H1 (cell line): ENCODE measurements at regions of chr11 and their contacts with region 1.

Region 1: GRCh38 chr11:125364121-125364826 is 131.8 kb downstream of the FEZ1 start:
- DNase-seq: no peak
- H3K4me3 ChIP-seq: no peak overlapping the region
- H3K27ac ChIP-seq: no peak overlapping the region
- H3K4me1 ChIP-seq: peaks cover 0 to under 1% (median under 1%) of the 10 kb centered on the region in 4 experiments; a peak in 3 of 7 replicates
- H3K27me3 ChIP-seq: no peaks in the 10 kb centered on the region
- CTCF ChIP-seq: peak; percentile 18 to 38 (median 30)
- EP300 ChIP-seq: no peak
- POLR2A ChIP-seq: no peak
- RAD21 ChIP-seq: no peak; a peak in 1 of 4 replicates

Region 2: GRCh38 chr11:125245299-125245698 is 119.0 kb before region 1 on chr11:
- CTCF ChIA-PET with region 1: no interaction called
- POLR2A ChIA-PET with region 1: no interaction called
- DNase-seq: no peak
- H3K4me3 ChIP-seq: no peak overlapping the region
- H3K27ac ChIP-seq: no peak overlapping the region
- H3K4me1 ChIP-seq: peaks cover 0 to 12% (median 3%) of the 10 kb centered on the region in 4 experiments; a peak in 5 of 7 replicates
- H3K27me3 ChIP-seq: 0 out of 7 replicates have a peak, but pooled peaks cover 0 to 2% (median 0%) of the 10 kb centered on the region in 4 experiments
- CTCF ChIP-seq: no peak
- EP300 ChIP-seq: no peak
- POLR2A ChIP-seq: no peak
- RAD21 ChIP-seq: no peak

Region 3: GRCh38 chr11:125376117-125376516 is 11.8 kb after region 1 on chr11:
- CTCF ChIA-PET with region 1: interaction called, 315 read pairs
- POLR2A ChIA-PET with region 1: interaction called, 3 read pairs
- DNase-seq: no peak
- H3K4me3 ChIP-seq: no peak overlapping the region
- H3K27ac ChIP-seq: no peak overlapping the region
- H3K4me1 ChIP-seq: peaks cover 12 to 25% (median 22%) of the 10 kb centered on the region in 4 experiments
- H3K27me3 ChIP-seq: peaks cover 0 to 4% (median 0%) of the 10 kb centered on the region in 4 experiments; a peak in 2 of 7 replicates
- CTCF ChIP-seq: no peak
- EP300 ChIP-seq: no peak
- POLR2A ChIP-seq: no peak
- RAD21 ChIP-seq: no peak

Region 4: GRCh38 chr11:125382314-125382791 is 18.1 kb after region 1 on chr11:
- CTCF ChIA-PET with region 1: interaction called, 315 read pairs
- POLR2A ChIA-PET with region 1: no interaction called
- DNase-seq: no peak
- H3K4me3 ChIP-seq: no peak overlapping the region
- H3K27ac ChIP-seq: no peak overlapping the region
- H3K4me1 ChIP-seq: peaks cover 0 to 9% (median 0%) of the 10 kb centered on the region in 4 experiments; a peak in 3 of 7 replicates
- H3K27me3 ChIP-seq: no peaks in the 10 kb centered on the region; a peak in 1 of 7 replicates
- CTCF ChIP-seq: no peak
- EP300 ChIP-seq: no peak
- POLR2A ChIP-seq: no peak
- RAD21 ChIP-seq: no peak

Region 5: GRCh38 chr11:125404776-125405435 is 40.6 kb after region 1 on chr11:
- CTCF ChIA-PET with region 1: interaction called, 223 read pairs
- POLR2A ChIA-PET with region 1: interaction called, 3 read pairs
- DNase-seq: peak in 1 of 2 experiments; percentile 97
- H3K4me3 ChIP-seq: no peak overlapping the region
- H3K27ac ChIP-seq: no peak overlapping the region
- H3K4me1 ChIP-seq: peaks cover 12 to 29% (median 17%) of the 10 kb centered on the region in 4 experiments
- H3K27me3 ChIP-seq: peaks cover 0 to 4% (median under 1%) of the 10 kb centered on the region in 4 experiments; a peak in 2 of 7 replicates
- CTCF ChIP-seq: peak; percentile 94 to 98 (median 96)
- EP300 ChIP-seq: no peak
- POLR2A ChIP-seq: no peak
- RAD21 ChIP-seq: peak; percentile 93 to 98

Region 6: DNA sequence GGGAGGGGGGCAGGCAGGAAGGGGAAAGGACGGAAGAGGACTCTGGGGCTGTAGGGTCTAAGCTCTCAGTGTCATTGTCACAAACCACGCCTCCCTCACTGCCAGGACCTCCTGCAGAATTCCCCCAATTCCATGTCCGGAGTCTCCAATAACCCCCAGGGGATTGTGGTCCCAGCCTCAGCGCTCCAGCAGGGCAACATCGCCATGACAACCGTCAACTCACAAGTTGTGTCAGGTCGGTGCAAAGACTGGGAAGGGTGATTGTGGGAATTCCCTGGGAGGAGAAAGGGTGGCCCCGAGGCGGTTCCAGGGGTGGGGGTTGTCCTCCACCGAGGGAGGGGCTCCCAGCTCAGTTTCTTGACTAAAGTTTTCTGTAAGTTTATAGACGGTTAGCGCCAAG is 45.8 kb after region 1 on chr11:
- CTCF ChIA-PET with region 1: interaction called, 223 read pairs
- POLR2A ChIA-PET with region 1: interaction called, 3 read pairs
- DNase-seq: peak in 1 of 2 experiments; percentile 60
- H3K4me3 ChIP-seq: no peak overlapping the region
- H3K27ac ChIP-seq: no peak overlapping the region
- H3K4me1 ChIP-seq: peaks cover 0 to 8% (median 4%) of the 10 kb centered on the region in 4 experiments; a peak in 3 of 7 replicates
- H3K27me3 ChIP-seq: 0 out of 7 replicates have a peak, but pooled peaks cover 0 to 4% (median under 1%) of the 10 kb centered on the region in 4 experiments
- CTCF ChIP-seq: no peak
- EP300 ChIP-seq: no peak
- POLR2A ChIP-seq: no peak
- RAD21 ChIP-seq: no peak

Region 7: DNA sequence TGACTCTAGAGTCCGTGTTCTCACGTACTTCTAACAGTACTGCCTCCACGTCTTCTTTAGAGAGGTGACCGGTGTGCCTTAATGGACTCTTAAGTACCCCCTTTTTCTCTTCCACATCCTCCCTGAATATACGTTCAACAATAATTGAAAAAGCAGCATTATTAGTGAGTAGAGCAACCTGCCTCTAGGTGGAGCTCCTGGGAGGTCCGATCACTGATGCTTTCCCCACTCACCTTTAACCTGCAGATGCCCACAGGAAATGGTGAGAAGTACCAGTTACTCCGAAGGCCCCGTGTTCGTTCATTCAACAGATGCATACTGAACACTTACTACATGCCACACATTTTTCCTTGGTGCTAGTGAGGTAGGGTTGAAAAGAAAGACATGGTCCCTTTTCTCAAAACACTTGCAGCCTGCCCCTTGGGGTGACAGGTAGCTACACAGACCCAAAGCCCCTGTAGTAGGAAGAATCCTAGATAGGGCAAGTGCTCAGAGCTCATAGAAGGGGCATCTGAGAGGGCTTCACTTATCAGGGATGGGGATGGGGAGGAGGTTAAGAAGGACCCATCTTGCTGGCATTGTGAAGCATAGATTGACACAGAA is 59.1 kb after region 1 on chr11:
- CTCF ChIA-PET with region 1: interaction called, 234 read pairs
- POLR2A ChIA-PET with region 1: no interaction called
- DNase-seq: no peak
- H3K4me3 ChIP-seq: no peak overlapping the region
- H3K27ac ChIP-seq: no peak overlapping the region
- H3K4me1 ChIP-seq: peaks cover 0 to 4% (median under 1%) of the 10 kb centered on the region in 4 experiments; a peak in 3 of 7 replicates
- H3K27me3 ChIP-seq: no peaks in the 10 kb centered on the region
- CTCF ChIP-seq: peak; percentile 54 to 80 (median 59)
- EP300 ChIP-seq: no peak
- POLR2A ChIP-seq: no peak
- RAD21 ChIP-seq: peak; percentile 40 to 47; a peak in 3 of 4 replicates

Region 8: GRCh38 chr11:125429166-125429707 is 65.0 kb after region 1 on chr11:
- CTCF ChIA-PET with region 1: interaction called, 234 read pairs
- POLR2A ChIA-PET with region 1: no interaction called
- DNase-seq: peak; percentile 58 to 90
- H3K4me3 ChIP-seq: no peak overlapping the region; a peak in 1 of 8 replicates
- H3K27ac ChIP-seq: no peak overlapping the region
- H3K4me1 ChIP-seq: peaks cover 0 to 12% (median 9%) of the 10 kb centered on the region in 4 experiments; a peak in 5 of 7 replicates
- H3K27me3 ChIP-seq: no peaks in the 10 kb centered on the region
- CTCF ChIP-seq: peak; percentile 82 to 96 (median 90)
- EP300 ChIP-seq: no peak
- POLR2A ChIP-seq: no peak
- RAD21 ChIP-seq: peak; percentile 94 to 95

Region 9: DNA sequence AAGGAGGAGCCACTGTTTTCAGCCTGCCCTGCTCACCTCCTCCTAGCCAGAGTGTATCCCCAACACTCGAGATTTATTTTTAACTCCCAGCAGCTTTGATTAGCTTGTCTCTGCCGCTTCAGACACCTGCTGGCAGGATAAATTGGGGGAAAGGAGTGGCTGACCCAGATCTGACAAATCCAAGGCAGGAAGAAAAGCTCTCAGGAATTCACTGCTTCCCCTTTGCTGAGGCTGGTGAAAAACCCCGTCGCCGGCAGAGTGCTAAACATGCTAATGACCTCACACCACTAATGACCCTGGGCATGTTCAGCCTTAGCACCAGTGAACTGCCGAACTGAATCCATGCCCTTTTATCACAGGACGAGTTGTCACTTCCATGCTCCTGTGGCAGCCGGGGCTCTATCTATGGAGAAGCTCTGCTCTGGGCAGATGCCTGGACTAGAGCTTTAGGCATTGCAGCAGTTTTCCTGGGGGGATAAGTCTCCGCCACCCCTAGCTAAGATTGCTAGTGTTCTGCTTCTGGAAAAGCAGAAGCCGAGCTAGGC is 79.6 kb after region 1 on chr11:
- CTCF ChIA-PET with region 1: no interaction called
- POLR2A ChIA-PET with region 1: no interaction called
- DNase-seq: no peak
- H3K4me3 ChIP-seq: peak overlapping the region in 3 of 4 experiments; percentile 7 to 36 (median 8); a peak in 4 of 8 replicates
- H3K27ac ChIP-seq: no peak overlapping the region; the same call in 1 of the 2 replicates
- H3K4me1 ChIP-seq: peaks cover 19 to 38% (median 29%) of the 10 kb centered on the region in 4 experiments
- H3K27me3 ChIP-seq: no peaks in the 10 kb centered on the region
- CTCF ChIP-seq: no peak
- EP300 ChIP-seq: no peak
- POLR2A ChIP-seq: no peak
- RAD21 ChIP-seq: no peak